ENCODE measurements at regions of chr22 and their contacts with region 1.

Region 1: DNA sequence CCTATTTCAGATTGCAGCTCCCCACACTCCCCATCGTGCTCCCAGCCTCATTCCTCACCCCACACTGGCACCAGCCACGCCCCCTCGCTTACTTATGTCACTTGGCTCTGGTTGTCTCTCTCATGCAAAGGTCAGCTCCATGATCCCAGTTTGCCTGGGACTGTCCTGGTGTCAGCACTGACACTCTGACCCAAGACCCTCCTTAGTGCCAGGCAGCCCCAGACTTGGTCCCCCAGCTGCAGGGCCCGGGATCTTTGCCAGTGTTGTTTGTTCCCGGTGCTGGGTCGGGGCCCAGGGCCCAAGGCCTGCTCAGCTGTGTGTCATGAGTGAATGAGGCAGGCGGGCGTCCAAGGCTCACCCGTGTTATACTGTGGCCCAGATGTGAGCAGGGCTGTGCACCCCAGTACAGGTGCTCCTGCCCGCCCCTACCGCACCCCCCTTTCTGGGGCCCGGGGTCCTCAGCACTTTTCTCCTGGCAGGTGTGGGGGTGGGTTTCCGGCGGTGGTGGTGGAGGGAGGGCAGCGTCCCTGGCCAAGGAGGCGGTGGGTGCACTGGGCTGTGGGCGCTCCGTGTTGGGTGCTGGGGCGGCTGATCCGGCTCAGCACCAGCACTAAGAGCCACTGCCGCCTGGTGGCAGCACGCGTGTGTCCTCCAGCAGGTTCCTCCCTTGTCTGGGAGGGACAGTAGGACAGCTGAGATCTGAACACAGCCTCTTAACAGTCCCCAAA is 19.5 kb downstream of the IL17REL start:
- DNase-seq: peak; percentile 75
- ATAC-seq: peak; percentile 91
- H3K4me3 Mint-ChIP-seq: no peak overlapping the region
- H3K27ac Mint-ChIP-seq: no peak overlapping the region
- H3K4me1 Mint-ChIP-seq: peaks cover 1% of the 10 kb centered on the region
- H3K27me3 Mint-ChIP-seq: peaks cover 3% of the 10 kb centered on the region

Region 2: DNA sequence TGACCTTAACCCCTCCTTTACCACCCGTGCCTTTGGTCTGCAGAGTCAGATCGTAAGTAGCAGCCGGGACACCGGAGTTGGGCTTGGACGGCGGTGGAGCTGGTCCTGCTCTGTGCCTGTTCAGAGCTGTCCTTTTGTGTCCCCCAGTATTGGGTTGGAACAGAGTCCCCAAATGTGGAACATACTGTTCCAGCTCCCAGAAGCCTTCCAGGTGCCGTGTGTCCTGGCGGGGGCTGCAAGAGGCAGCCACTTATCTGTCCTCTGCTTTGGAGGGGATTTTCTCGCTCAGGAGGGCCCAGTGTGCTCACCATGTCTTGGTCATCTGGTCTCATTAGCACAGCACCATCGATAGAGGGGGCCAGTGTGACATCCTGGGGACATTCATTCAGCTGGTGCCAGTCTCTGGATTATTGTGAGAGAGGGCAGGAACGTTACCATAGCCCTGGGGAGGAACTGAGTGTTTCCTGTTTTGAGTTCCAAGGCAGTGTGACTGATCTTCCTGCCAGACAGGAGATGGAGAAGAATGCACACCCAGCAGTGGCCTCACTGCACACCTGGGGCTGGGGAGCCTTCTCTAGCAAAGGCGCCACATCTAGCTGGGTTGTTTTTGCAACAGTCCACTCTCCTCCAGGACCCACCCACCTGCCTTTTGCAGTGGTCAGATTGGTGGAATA is 62.2 kb before region 1 on chr22:
- CTCF ChIA-PET with region 1: interaction called, 12 read pairs
- POLR2A ChIA-PET with region 1: no interaction called
- DNase-seq: peak; percentile 63
- ATAC-seq: no peak
- H3K4me3 Mint-ChIP-seq: no peak overlapping the region
- H3K27ac Mint-ChIP-seq: peak overlapping the region; percentile 60
- H3K4me1 Mint-ChIP-seq: peaks cover 34% of the 10 kb centered on the region
- H3K27me3 Mint-ChIP-seq: no peaks in the 10 kb centered on the region

Region 3: DNA sequence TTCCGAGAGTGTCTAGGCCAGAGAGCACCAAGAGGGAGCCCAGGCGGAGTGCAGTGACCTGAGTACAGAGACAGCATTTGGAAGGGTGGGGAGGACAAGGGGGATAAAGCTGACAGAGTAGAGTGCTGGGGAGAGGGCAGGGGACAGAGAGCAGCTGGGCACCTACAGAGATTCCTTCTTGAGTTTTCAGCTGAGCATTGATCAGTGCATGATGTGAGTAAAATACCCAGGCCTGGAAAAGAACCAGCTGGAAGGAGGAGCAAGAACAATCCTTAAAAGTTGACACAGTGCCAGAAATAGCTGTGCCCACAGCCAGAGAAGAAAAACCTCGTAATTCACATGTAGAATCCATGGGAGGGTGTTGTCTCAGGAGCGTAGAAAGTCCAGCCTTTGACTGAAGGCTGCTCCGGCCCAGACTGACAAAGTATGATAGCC is 143.5 kb after region 1 on chr22:
- CTCF ChIA-PET with region 1: no interaction called
- POLR2A ChIA-PET with region 1: no interaction called
- DNase-seq: no peak
- ATAC-seq: no peak
- H3K4me3 Mint-ChIP-seq: no peak overlapping the region
- H3K27ac Mint-ChIP-seq: no peak overlapping the region
- H3K4me1 Mint-ChIP-seq: no peaks in the 10 kb centered on the region
- H3K27me3 Mint-ChIP-seq: peaks cover 23% of the 10 kb centered on the region